Caco-2 (cell line): ENCODE measurements at regions of chr2 and their contacts with region 1.

Region 1: GRCh38 chr2:234368861-234369261 is 128.0 kb downstream of the ARL4C start:
- DNase-seq: peak; percentile 61 to 69
- H3K4me3 ChIP-seq: no peak overlapping the region
- H3K4me3 Mint-ChIP-seq: no peak overlapping the region
- H3K27ac Mint-ChIP-seq: peak overlapping the region; percentile 77
- H3K4me1 ChIP-seq: peaks cover 65% of the 10 kb centered on the region
- H3K4me1 Mint-ChIP-seq: peaks cover 47% of the 10 kb centered on the region
- H3K27me3 ChIP-seq: no peaks in the 10 kb centered on the region
- H3K27me3 Mint-ChIP-seq: no peaks in the 10 kb centered on the region
- CTCF ChIP-seq: no peak

Region 2: DNA sequence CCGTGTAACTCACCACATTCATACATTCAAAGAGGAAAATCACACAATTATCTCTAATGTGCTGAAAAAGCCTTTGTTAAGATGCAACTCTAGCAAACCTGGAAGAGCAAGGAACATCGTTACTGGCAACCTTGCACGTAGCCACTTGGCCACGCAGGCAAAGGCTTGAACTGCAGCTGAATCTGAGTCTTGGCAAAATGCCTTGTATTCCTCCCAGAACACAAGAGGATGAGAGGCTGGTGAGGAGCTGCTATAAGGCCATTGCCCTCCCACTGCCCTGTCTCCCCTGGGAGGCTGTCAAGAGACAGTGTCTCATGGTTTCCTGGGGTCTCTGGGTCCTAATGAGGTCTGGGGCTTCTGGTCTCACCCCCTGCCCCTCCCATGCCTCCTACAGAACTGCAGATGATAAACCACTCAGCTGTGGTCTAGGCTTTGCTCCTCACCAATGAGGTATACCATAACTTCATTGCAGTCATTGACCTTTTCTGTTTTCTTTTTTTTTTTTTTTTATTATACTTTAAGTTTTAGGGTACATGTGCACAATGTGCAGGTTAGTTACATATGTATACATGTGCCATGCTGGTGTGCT is 176.9 kb before region 1 on chr2:
- CTCF ChIA-PET with region 1: no interaction called
- POLR2A ChIA-PET with region 1: no interaction called
- intact Hi-C with region 1: loop called (anchors 10 kb)
- DNase-seq: no peak
- H3K4me3 ChIP-seq: no peak overlapping the region
- H3K4me3 Mint-ChIP-seq: no peak overlapping the region
- H3K27ac Mint-ChIP-seq: no peak overlapping the region
- H3K4me1 ChIP-seq: peaks cover 22% of the 10 kb centered on the region
- H3K4me1 Mint-ChIP-seq: peaks cover 28% of the 10 kb centered on the region
- H3K27me3 ChIP-seq: no peaks in the 10 kb centered on the region
- H3K27me3 Mint-ChIP-seq: no peaks in the 10 kb centered on the region
- CTCF ChIP-seq: no peak